Activated T-helper 1 cell treated with anti-CD3 and anti-CD28 coated beads, Interleukin-12 subunit alpha, Interleukin-12 subunit beta, Interleukin-2, Interleukin-4 antibody, amounts not matched to agents 30 ng/mL and 10 ng/mL and 1 ng/mL, durations not matched to agents 14 hours and 24 hours and 36 hours (primary cell): ENCODE measurements at regions of chr13 and their contacts with region 1.

Region 1: DNA sequence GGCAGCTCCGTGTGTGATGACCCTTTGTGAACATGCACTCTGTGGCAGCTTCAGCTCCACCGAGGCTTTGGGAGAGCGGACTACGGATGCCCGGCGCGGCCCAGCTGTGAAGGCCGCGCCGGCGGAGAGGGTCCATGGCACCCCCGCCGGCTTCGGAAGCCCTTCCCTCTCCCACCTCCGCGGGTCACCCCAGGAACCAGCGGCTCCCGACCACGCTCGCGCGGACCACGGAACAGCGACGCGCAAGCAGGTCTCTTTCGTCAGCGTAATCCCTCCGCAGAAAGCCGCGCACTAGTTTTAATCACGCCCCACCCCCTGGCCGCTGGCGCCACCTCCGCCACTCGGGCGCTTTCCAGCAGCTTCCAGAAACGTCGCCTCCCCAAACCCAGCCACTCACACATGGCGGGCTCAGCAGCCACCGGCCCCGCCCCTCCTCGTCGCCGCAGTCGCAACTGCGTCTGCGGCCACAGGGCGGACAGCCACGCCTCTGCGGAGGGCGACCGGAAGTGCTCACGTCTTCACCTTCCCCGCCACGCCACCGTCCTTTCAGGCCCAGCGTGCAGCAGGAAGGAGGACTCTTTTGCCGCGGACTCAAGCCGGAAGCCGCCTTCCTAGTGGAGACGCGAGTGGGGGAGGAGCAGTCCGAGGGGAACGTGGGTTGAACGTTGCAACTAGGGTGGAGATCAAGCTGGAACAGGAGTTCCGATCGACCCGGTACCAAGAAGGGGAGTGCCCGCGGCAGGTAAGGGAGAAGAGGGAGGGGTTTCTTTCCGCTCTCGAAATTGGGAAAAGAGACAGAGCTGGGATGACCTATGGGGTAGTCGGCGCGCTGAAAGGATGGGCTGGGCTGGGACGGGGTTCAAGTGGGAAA is at the start of gene USPL1:
- DNase-seq: peak; percentile 99
- H3K4me3 Mint-ChIP-seq: no peak within 1 kb of the TSS
- H3K27ac Mint-ChIP-seq: no peak within 1 kb of the TSS
- H3K4me1 Mint-ChIP-seq: peaks cover 12% of the 10 kb centered on the region
- H3K27me3 Mint-ChIP-seq: no peaks in the 10 kb centered on the region
- total RNA-seq, gene USPL1: 17.2 and 17.5 TPM in 2 replicates

Region 2: GRCh38 chr13:30306762-30307193 is 310.8 kb before region 1 on chr13:
- intact Hi-C with region 1: loop called (anchors 1 kb)
- DNase-seq: peak; percentile 90
- H3K4me3 Mint-ChIP-seq: peak overlapping the region; percentile 88
- H3K27ac Mint-ChIP-seq: peak overlapping the region; percentile 84
- H3K4me1 Mint-ChIP-seq: peaks cover 65% of the 10 kb centered on the region
- H3K27me3 Mint-ChIP-seq: no peaks in the 10 kb centered on the region

Region 3: DNA sequence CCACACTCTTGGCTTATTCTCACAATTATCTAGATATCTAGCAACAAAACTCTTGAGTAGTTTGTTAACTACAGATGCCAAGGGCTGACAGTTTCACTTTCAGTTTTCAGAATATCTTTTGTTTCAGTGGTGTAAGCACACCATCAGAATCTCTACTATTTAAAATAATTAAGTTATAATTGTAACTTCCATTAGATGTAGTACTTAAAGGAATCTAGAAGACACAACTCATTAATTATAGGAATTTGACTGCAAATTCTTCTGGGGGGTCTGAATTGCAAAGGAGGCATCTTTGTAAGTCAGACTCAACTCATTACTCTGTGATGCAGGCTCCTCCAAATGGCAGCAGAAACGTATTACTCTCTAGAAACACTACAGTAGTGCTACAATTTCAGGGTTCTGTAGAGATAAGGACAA is 44.7 kb before region 1 on chr13:
- intact Hi-C with region 1: loop called (anchors 1 kb)
- DNase-seq: no peak
- H3K4me3 Mint-ChIP-seq: peak overlapping the region; percentile 59
- H3K27ac Mint-ChIP-seq: no peak overlapping the region
- H3K4me1 Mint-ChIP-seq: peaks cover 44% of the 10 kb centered on the region
- H3K27me3 Mint-ChIP-seq: peaks cover 9% of the 10 kb centered on the region

Region 4: GRCh38 chr13:30654430-30654829 is 36.9 kb after region 1 on chr13:
- intact Hi-C with region 1: loop called (anchors 1 kb)
- DNase-seq: peak; percentile 48
- H3K4me3 Mint-ChIP-seq: peak overlapping the region; percentile 68
- H3K27ac Mint-ChIP-seq: peak overlapping the region; percentile 89
- H3K4me1 Mint-ChIP-seq: peaks cover 43% of the 10 kb centered on the region
- H3K27me3 Mint-ChIP-seq: no peaks in the 10 kb centered on the region

Region 5: GRCh38 chr13:30802953-30803478 is 185.5 kb after region 1 on chr13:
- intact Hi-C with region 1: loop called (anchors 1 kb)
- DNase-seq: peak; percentile 69
- H3K4me3 Mint-ChIP-seq: peak overlapping the region; percentile 47
- H3K27ac Mint-ChIP-seq: no peak overlapping the region
- H3K4me1 Mint-ChIP-seq: peaks cover 28% of the 10 kb centered on the region
- H3K27me3 Mint-ChIP-seq: peaks cover 4% of the 10 kb centered on the region